Caco-2 (cell line): ENCODE measurements at regions of chr17 and their contacts with region 1.

Region 1: DNA sequence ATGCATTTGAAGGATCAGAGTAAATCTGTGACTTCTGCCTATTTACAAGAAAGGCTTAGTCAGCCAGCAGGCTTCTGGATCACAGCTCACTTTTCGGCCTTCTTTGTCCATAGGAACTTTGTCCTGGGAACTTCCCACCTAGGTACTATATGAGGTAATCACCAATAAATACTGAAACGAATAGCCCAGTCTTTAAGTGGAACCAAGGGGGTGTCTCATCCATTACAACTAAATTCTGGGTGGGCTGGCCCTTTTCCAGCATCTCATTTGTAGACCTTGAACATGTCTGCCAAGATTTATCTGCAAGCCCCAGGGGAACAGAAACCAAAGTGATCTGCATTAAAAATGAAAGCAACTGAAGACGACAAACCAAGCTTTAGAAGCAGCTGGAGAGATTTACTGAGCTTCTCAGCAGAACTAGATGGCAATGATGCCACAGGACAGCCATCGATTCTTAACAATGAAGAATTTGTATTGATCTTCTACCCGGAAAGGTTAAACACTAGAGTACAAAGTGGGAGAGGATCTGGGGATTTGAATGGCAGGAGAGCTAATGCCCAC is 55.5 kb downstream of the SNX11 start:
- DNase-seq: peak in 1 of 2 experiments; percentile 45
- H3K4me3 ChIP-seq: no peak overlapping the region
- H3K4me3 Mint-ChIP-seq: no peak overlapping the region
- H3K27ac Mint-ChIP-seq: no peak overlapping the region
- H3K4me1 ChIP-seq: peaks cover 44% of the 10 kb centered on the region
- H3K4me1 Mint-ChIP-seq: peaks cover 57% of the 10 kb centered on the region
- H3K27me3 ChIP-seq: no peaks in the 10 kb centered on the region
- H3K27me3 Mint-ChIP-seq: no peaks in the 10 kb centered on the region
- CTCF ChIP-seq: no peak

Region 2: DNA sequence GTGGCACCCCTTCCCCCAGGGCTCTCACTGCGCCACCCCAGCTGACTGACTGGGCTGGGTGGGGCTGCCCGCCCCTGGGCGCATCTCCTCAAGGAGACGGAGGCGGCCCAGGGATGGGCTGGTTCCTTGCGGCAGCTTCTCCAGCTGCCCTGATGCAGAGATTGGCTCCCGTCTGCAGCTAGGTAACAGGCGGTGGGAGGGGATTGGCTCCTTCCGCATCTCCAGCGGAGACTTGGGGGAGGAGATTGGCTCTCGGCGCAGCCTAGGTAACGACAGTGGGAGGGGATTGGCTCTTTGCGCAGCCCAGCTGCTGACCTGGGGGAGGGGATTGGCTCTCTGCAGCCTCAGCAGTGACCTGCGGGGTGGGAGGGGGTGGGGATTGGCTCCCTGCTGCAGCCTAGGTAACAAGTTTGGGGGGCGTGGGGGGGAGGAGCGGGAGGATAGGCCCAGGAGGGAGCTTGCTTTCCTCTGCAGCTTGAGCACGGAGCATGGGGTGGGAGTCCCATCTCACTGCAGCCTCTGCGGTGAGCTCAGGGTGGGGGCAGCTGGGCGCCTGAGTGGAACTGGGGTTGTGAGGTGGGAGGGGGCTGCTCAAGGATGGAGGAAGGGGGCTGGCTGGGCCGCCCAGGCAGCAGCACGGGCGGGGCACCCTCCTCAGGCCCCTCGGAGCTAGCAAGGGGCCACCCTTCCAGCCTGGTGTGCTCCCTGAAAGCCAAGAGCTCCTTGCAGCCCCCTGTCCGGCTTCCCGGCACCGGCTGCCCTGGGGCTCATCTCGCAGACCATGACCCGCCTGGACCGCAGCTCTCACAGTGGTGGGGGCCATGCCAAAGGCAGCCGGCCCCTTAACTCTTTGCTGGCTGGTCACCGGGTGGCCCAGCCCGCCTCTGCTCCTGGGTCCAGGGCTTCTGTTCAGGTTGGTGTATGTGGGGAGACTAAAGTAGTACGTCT is 108.5 kb before region 1 on chr17:
- CTCF ChIA-PET with region 1: no interaction called
- POLR2A ChIA-PET with region 1: no interaction called
- intact Hi-C with region 1: no loop called
- DNase-seq: peak in 1 of 2 experiments; percentile 53
- H3K4me3 ChIP-seq: no peak overlapping the region
- H3K4me3 Mint-ChIP-seq: peak overlapping the region; percentile 18
- H3K27ac Mint-ChIP-seq: peak overlapping the region; percentile 97
- H3K4me1 ChIP-seq: peaks cover 30% of the 10 kb centered on the region
- H3K4me1 Mint-ChIP-seq: peaks cover 40% of the 10 kb centered on the region
- H3K27me3 ChIP-seq: no peaks in the 10 kb centered on the region
- H3K27me3 Mint-ChIP-seq: no peaks in the 10 kb centered on the region
- CTCF ChIP-seq: no peak

Region 3: DNA sequence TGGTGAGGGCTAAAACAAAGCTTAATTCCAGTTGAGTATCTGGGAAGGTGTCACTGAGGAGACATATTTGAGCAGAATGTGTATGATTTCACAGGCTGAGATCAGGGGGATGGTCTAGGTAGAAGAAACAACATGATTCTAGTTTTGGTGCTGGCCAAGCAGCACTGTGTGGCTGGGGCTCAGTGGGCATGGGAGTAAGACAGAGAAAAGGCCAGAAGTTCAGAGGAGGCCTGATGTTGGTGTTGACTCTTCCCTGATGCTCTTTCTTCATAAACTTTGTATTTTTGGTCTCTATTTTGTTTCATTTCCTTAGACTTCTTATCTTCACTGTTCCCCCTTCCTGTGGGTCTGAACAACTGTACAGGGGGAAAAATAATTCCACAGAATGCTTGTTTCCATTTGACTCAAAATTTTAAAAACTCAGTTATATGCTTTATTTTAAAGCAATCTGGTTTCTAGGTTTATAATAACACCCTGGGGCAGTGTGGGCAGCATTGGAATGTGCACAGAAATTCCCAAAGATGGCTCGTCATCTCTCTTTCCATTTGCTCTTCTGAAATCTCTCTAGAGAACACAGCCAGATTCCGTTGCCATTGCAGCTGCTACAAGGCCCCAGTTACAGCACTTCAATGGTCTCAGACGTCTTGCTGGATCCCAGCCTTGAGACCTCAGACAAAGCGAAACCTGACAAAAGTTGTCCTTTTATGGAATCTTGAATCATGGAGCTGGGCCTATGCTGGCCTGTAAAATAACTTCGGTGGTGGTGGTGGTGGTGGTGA is 12.9 kb after region 1 on chr17:
- CTCF ChIA-PET with region 1: interaction called, 4 read pairs
- POLR2A ChIA-PET with region 1: interaction called, 15 read pairs
- intact Hi-C with region 1: no loop called
- DNase-seq: no peak
- H3K4me3 ChIP-seq: no peak overlapping the region
- H3K4me3 Mint-ChIP-seq: no peak overlapping the region
- H3K27ac Mint-ChIP-seq: no peak overlapping the region
- H3K4me1 ChIP-seq: no peaks in the 10 kb centered on the region
- H3K4me1 Mint-ChIP-seq: no peaks in the 10 kb centered on the region
- H3K27me3 ChIP-seq: 0 out of 2 replicates have a peak, but pooled peaks cover 2% of the 10 kb centered on the region
- H3K27me3 Mint-ChIP-seq: peaks cover 11% of the 10 kb centered on the region
- CTCF ChIP-seq: no peak

Region 4: DNA sequence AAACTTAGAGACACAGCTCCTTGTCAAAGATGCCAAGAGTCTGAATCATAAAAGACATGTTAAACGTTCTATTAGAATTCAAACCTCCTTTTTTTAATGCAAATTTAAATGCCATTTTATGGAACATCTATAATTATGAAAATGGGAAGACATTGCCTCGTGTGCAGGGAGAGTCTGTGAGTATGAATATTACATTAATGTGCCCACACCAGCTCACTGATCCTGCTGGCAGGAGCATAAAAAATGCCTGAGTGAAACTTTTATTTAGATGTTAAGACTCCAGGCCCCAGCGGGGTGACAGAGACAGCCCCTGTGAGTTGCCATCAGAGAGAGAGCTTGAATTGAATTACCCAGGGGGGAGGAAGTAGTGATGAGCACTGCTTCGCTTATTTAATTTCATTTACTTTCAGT is 29.3 kb after region 1 on chr17:
- CTCF ChIA-PET with region 1: interaction called, 3 read pairs
- POLR2A ChIA-PET with region 1: no interaction called
- intact Hi-C with region 1: loop called (anchors 2 kb)
- DNase-seq: no peak
- H3K4me3 ChIP-seq: no peak overlapping the region
- H3K4me3 Mint-ChIP-seq: no peak overlapping the region
- H3K27ac Mint-ChIP-seq: no peak overlapping the region
- H3K4me1 ChIP-seq: peaks cover 18% of the 10 kb centered on the region; the same call in 1 of the 2 replicates
- H3K4me1 Mint-ChIP-seq: peaks cover 22% of the 10 kb centered on the region
- H3K27me3 ChIP-seq: no peaks in the 10 kb centered on the region
- H3K27me3 Mint-ChIP-seq: no peaks in the 10 kb centered on the region
- CTCF ChIP-seq: no peak

Region 5: DNA sequence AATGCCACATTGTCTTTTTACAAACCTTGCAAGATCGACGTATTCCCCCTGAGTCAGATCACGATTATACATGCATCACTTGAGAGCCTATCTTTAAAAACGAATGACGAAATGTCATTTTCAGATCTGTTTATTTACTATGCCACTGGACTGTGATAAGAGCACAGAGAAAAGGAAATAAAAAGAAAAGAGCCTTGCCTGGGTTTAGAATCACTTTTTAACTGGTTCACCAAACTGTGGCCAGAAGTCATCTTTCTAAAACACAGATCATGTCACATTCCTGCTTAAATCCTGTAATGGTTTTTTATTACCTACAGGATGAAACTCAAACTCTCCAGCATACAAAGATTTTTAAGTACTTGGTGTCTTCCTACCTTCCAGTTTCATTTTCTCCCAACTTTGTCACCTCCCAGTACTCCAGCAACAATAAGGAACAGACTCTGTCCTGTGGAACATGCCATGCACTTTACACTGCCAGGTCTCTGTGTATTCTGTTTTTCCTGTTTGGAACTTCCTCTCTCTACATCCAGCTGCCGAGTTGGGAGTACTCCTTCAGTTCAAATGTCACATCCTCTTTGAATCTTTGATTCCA is 36.0 kb after region 1 on chr17:
- CTCF ChIA-PET with region 1: interaction called, 3 read pairs
- POLR2A ChIA-PET with region 1: interaction called, 10 read pairs
- intact Hi-C with region 1: no loop called
- DNase-seq: no peak
- H3K4me3 ChIP-seq: no peak overlapping the region
- H3K4me3 Mint-ChIP-seq: peak overlapping the region; percentile 0
- H3K27ac Mint-ChIP-seq: no peak overlapping the region
- H3K4me1 ChIP-seq: peaks cover 17% of the 10 kb centered on the region
- H3K4me1 Mint-ChIP-seq: peaks cover 21% of the 10 kb centered on the region
- H3K27me3 ChIP-seq: no peaks in the 10 kb centered on the region
- H3K27me3 Mint-ChIP-seq: no peaks in the 10 kb centered on the region
- CTCF ChIP-seq: no peak